AG04449 (cell line): ENCODE measurements at regions of chr12 and their contacts with region 1.

Region 1: GRCh38 chr12:98532681-98533304 is 17.4 kb downstream of the TMPO start:
- DNase-seq: no peak
- H3K4me3 ChIP-seq: no peak overlapping the region
- CTCF ChIP-seq: peak; percentile 29

Region 2: DNA sequence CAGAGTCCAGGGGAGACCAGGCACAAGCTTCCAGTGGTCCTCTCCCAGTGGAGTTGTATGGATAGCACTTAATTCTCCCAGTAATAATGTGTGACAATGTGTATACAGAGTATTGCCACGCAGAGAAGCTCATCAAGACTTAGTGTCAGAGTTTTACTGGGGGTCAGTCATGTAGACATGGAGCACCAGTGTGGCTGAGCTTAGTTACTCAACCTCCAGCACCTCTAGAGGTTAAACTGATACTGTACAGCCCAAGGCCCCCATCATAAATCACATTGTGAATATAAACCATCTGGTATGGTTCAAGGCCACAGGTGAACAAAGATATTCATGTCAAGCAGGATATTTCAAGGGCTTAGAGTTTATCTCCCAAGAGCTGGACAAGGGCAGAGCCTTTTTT is 395.5 kb before region 1 on chr12:
- CTCF ChIA-PET with region 1: no interaction called
- POLR2A ChIA-PET with region 1: no interaction called
- DNase-seq: no peak
- H3K4me3 ChIP-seq: no peak overlapping the region
- CTCF ChIP-seq: no peak

Region 3: GRCh38 chr12:98418357-98419075 is 114.3 kb before region 1 on chr12:
- CTCF ChIA-PET with region 1: interaction called, 78 read pairs
- POLR2A ChIA-PET with region 1: no interaction called
- DNase-seq: peak; percentile 99
- H3K4me3 ChIP-seq: peak overlapping the region; percentile 45
- CTCF ChIP-seq: no peak

Region 4: DNA sequence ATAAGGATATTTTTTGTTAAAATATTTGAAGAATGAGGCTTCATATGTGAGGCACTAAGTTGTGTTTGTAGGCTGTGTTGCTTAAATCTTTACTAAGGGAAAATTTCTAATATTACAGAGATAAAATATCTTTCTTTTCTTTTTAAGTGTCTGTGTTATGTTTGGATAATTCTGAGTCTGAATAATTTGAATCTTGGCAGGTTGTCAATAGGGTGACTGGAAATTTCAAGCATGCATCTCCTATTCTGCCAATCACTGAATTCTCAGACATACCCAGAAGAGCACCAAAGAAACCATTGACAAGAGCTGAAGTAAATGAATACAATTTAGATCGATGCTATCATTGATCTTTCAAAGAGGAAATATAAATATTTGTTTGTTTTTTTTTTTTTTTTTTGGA is 12.0 kb after region 1 on chr12:
- CTCF ChIA-PET with region 1: interaction called, 47 read pairs
- POLR2A ChIA-PET with region 1: no interaction called
- DNase-seq: no peak
- H3K4me3 ChIP-seq: no peak overlapping the region
- CTCF ChIP-seq: no peak

Region 5: DNA sequence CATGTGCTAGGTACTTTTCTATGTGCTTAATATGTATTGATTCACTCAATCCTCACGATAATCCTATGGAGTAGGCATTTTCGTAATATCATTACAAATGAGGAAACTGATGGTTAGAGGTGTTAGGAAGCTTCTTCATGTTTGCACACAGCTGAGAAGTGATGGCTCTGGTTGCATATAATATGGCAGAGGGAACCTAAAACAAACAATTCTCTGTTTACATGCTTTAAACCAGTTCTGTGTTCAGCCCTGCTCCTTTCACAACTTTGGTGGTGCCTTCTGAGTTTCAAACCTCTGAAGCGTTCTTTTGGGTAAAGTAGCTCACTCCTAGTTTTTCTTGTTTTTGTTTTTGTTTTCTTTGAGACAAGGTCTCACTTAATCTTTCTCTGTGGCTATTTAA is 18.0 kb after region 1 on chr12:
- CTCF ChIA-PET with region 1: interaction called, 47 read pairs
- POLR2A ChIA-PET with region 1: no interaction called
- DNase-seq: no peak
- H3K4me3 ChIP-seq: no peak overlapping the region
- CTCF ChIP-seq: no peak